ENCODE measurements at regions of chr1 and their contacts with region 1.

Region 1: DNA sequence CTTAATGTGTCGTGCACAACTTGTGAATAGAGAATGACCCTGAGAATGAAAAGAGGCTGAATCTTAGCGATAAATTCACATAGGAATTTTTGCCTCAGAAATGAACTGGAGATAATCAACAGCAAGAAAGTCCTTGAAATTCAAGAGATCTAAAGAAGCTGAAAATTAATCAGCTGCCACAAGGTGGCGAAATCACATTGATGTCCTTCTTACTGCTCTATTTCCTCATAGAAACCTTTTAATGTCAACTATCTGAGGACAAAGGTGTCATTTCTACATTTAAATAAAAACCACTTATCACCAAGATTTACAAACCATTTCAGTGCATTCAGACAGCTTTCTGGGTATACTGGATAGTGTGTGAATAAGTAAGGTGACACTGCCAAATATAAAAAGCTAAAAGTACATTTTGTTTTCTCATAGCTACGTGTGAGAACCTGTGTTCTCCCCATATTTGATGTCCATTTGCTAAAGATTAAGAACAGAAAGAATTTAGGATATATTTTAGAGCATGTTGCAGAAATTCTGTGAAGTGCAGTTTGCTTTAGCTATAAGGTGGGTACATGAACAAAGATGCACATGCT is 485.3 kb upstream of the PTBP2 start:
- DNase-seq: peak; percentile 21
- H3K4me3 Mint-ChIP-seq: no peak overlapping the region
- H3K27ac Mint-ChIP-seq: no peak overlapping the region
- H3K4me1 Mint-ChIP-seq: no peaks in the 10 kb centered on the region
- H3K27me3 Mint-ChIP-seq: peaks cover 1% of the 10 kb centered on the region

Region 2: DNA sequence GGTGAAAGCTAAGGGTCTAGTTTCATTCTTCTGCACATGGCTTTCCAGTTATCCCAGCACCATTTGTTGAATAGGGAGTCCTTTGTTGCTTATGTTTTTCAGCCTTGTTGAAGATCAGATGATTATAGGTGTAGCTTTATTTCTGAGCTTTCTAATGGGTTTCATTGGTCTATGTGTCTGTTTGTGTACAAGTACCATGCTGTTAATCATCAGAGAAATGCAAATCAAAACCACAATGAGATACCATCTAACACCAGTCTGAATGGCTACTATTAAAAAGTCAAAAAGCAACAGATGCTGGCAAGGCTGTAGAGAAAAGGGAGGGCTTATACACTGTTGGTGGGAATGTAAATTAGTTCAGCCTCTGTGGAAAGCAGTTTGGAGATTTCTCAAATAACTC is 163.8 kb after region 1 on chr1:
- CTCF ChIA-PET with region 1: no interaction called
- intact Hi-C with region 1: loop called (anchors 10 kb)
- DNase-seq: no peak
- H3K4me3 Mint-ChIP-seq: no peak overlapping the region
- H3K27ac Mint-ChIP-seq: no peak overlapping the region
- H3K4me1 Mint-ChIP-seq: no peaks in the 10 kb centered on the region
- H3K27me3 Mint-ChIP-seq: no peaks in the 10 kb centered on the region

Region 3: GRCh38 chr1:96445302-96445701 is 209.1 kb after region 1 on chr1:
- CTCF ChIA-PET with region 1: no interaction called
- intact Hi-C with region 1: no loop called
- DNase-seq: no peak
- H3K4me3 Mint-ChIP-seq: no peak overlapping the region
- H3K27ac Mint-ChIP-seq: no peak overlapping the region
- H3K4me1 Mint-ChIP-seq: no peaks in the 10 kb centered on the region
- H3K27me3 Mint-ChIP-seq: no peaks in the 10 kb centered on the region

Region 4: GRCh38 chr1:96641282-96641681 is 405.0 kb after region 1 on chr1:
- CTCF ChIA-PET with region 1: no interaction called
- intact Hi-C with region 1: no loop called
- DNase-seq: no peak
- H3K4me3 Mint-ChIP-seq: no peak overlapping the region
- H3K27ac Mint-ChIP-seq: no peak overlapping the region
- H3K4me1 Mint-ChIP-seq: no peaks in the 10 kb centered on the region
- H3K27me3 Mint-ChIP-seq: no peaks in the 10 kb centered on the region

Region 5: DNA sequence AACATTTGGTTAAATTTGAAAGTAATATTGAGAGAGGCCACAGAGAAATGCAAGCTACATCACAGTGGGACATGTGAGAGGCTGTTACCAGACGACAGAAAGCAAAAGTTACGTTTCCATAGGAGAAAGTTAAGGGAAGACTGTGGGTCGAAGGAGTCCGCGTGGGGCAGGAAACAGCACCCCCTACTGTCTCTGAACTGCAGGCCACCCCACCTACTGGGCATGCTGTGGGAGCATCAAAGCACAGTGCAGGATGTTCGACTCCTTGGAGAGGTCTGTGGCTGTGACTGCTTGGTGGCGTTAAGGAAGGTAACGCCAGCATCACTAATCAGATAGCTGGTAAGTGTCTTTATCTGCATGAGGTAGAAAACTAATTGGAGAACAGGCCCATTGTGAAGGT is 609.2 kb after region 1 on chr1:
- CTCF ChIA-PET with region 1: interaction called, 6 read pairs
- intact Hi-C with region 1: loop called (anchors 1 kb)
- DNase-seq: peak; percentile 52
- H3K4me3 Mint-ChIP-seq: no peak overlapping the region
- H3K27ac Mint-ChIP-seq: no peak overlapping the region
- H3K4me1 Mint-ChIP-seq: no peaks in the 10 kb centered on the region
- H3K27me3 Mint-ChIP-seq: peaks cover 2% of the 10 kb centered on the region

Region 6: DNA sequence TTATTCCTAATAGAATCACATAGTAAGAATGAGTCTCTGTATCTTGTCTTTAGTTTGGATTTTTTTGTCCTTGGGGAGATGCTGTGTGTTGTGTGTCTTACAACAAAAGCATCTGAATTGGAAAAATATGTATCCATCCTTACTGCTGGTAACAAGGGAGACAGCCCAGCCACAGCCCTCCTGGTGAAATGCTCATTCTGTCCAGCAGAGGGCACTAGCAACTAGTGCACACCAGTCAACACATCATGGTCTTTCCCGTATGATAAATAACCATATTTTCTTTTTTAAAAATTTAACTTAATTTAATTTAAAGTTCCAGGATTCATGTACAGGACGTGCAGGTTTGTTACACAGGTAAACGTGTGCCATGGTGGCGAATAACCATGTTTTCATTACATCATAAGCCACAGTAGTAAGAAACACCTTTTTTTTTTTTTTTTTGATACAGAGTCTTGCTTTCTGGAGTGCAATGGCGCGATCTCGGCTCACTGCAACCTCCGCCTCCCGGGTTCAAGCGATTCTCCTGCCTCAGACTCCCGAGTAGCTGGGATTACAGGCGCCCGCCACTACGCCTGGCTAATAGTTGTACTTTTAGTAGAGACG is 730.4 kb after region 1 on chr1:
- CTCF ChIA-PET with region 1: no interaction called
- intact Hi-C with region 1: loop called (anchors 10 kb)
- DNase-seq: peak; percentile 87
- H3K4me3 Mint-ChIP-seq: no peak overlapping the region
- H3K27ac Mint-ChIP-seq: no peak overlapping the region
- H3K4me1 Mint-ChIP-seq: no peaks in the 10 kb centered on the region
- H3K27me3 Mint-ChIP-seq: peaks cover 31% of the 10 kb centered on the region

Region 7: GRCh38 chr1:97565886-97566285 is 1329.6 kb after region 1 on chr1:
- CTCF ChIA-PET with region 1: no interaction called
- intact Hi-C with region 1: no loop called
- DNase-seq: no peak
- H3K4me3 Mint-ChIP-seq: no peak overlapping the region
- H3K27ac Mint-ChIP-seq: no peak overlapping the region
- H3K4me1 Mint-ChIP-seq: no peaks in the 10 kb centered on the region
- H3K27me3 Mint-ChIP-seq: no peaks in the 10 kb centered on the region

Measured in activated naive CD4-positive, alpha-beta T cell treated with anti-CD3 and anti-CD28 coated beads for 36 hours (primary cell).